Heart right ventricle (tissue), 16 donors: ENCODE measurements at regions of chr17 and their contacts with region 1.

Region 1: DNA sequence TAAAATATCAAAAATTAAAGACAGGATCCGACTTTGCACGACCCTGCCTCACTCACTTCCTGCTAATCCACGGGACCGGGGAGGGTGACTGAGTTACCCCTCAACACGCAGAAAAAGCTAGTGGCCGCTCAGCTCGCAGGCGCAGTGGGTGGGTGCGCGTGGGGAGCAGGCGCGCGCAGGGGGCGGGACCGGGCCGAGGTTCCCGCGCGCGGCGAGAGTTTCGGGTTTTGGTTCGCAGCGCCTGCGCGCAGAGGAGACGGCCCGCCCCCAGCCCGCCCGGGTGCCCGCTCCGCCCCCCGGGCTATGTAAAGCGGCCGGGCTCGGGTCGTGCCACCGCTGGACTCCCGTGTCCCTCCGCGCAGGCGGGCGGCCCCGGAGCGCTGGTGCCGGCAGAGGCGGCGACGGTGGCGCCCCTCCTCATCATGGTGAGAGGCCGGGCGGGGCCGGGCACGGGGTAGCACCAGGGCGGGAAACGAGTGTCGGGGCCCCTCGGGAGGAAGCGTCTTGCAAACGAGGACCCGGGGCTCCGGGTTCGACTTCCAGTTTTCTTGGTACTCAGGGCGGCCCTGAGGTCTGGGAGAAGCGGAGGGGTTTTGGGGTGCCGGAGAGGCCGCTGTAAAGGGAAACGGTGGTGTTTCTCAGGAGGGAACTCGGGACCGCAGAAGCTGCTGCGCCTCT is at the start of gene CNP:
- DNase-seq: peak; percentile 91 to 93
- ATAC-seq: peak; percentile 90 to 97 (median 95)
- H3K4me3 ChIP-seq: peak within 1 kb of the TSS; percentile 69 to 100 (median 92)
- H3K27ac ChIP-seq: peak within 1 kb of the TSS; percentile 72 to 93 (median 90)
- H3K4me1 ChIP-seq: peaks cover 8 to 57% (median 34%) of the 10 kb centered on the region in 9 donors
- H3K27me3 ChIP-seq: no peaks in the 10 kb centered on the region
- CTCF ChIP-seq: no peak
- total RNA-seq, gene CNP: 19.4 to 42.7 (median 26.2) TPM

Region 2: GRCh38 chr17:42002792-42003301 is 36.2 kb after region 1 on chr17:
- intact Hi-C with region 1: loop called in 1 of 10 experiments (anchors 5 kb)
- DNase-seq: no peak
- ATAC-seq: no peak
- H3K4me3 ChIP-seq: no peak overlapping the region
- H3K27ac ChIP-seq: peak overlapping the region in 1 of 10 donors; percentile 11
- H3K4me1 ChIP-seq: peaks cover 0 to 78% (median 52%) of the 10 kb centered on the region in 9 donors
- H3K27me3 ChIP-seq: no peaks in the 10 kb centered on the region
- CTCF ChIP-seq: no peak

Region 3: DNA sequence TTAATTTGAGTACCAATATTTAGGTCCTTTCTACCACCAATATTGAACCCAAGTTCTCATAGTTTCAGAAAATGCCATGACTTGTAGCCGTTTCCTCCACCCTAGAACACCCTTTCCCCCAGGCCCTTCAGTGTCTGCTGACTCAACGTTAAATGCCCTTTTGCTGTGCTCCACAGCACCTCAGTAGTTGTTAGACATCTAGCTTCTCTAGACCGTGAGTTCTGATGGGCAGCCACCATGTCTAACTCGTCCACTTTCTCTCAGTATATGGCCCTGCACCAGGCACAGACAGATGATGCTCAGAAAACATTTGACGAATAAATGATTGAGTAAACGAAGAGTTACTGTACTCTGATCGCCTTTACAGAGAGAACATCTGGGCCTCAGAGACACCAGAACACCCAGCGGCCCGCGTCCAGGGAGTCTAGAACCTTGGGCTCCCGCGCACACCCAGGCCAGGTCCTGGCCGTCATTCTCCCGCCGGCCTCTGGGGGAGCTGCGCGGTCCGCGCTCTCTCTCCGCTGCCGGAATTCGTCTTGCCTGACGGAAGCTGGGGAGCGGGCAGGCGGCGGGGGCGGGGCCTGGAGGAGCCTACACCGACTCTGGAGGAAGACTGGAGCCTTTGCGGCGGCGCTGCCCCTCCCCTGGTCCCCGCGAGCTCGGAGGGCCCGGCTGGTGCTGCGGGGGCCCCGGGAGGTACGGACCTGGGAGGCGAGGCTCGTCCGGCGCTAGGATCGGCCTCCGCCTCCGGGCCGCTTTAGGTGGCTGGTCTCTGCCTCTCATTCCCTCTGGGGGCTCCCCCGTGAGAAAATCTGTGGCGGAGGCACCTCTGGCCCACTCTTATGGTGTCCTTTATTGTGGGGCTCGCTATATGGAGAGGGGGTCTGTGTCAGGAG is 53.2 kb after region 1 on chr17 and contains the start of gene NKIRAS2:
- intact Hi-C with region 1: loop called in 7 of 10 experiments (anchors 5 kb)
- DNase-seq: peak; percentile 94 to 95
- ATAC-seq: peak; percentile 76 to 84 (median 80)
- H3K4me3 ChIP-seq: peak within 1 kb of the TSS; percentile 73 to 98 (median 92)
- H3K27ac ChIP-seq: peak within 1 kb of the TSS; percentile 52 to 96 (median 90)
- H3K4me1 ChIP-seq: peaks cover 7 to 65% (median 49%) of the 10 kb centered on the region in 9 donors
- H3K27me3 ChIP-seq: no peaks in the 10 kb centered on the region
- CTCF ChIP-seq: peak; percentile 84 to 98 (median 96)
- total RNA-seq, gene NKIRAS2: 50.1 to 64.1 (median 57.2) TPM

Region 4: GRCh38 chr17:42112552-42113176 is 146.1 kb after region 1 on chr17 and contains the start of gene DHX58:
- intact Hi-C with region 1: loop called (anchors 1 to 10 kb)
- DNase-seq: peak; percentile 56 to 82
- ATAC-seq: peak; percentile 65 to 93 (median 85)
- H3K4me3 ChIP-seq: peak within 1 kb of the TSS; percentile 16 to 69 (median 62)
- H3K27ac ChIP-seq: peak within 1 kb of the TSS; percentile 69 to 93 (median 90)
- H3K4me1 ChIP-seq: peaks cover 7 to 37% (median 17%) of the 10 kb centered on the region in 9 donors
- H3K27me3 ChIP-seq: no peaks in the 10 kb centered on the region
- CTCF ChIP-seq: peak in 1 of 9 donors; percentile 9
- total RNA-seq, gene DHX58: 2.2 to 8.4 (median 4.0) TPM